ENCODE measurements at regions of chr11 and their contacts with region 1.

Region 1: GRCh38 chr11:66842896-66843775 is at the start of gene RCE1:
- DNase-seq: peak; percentile 80 to 98 (median 90)
- ATAC-seq: peak; percentile 82
- H3K4me3 ChIP-seq: peak within 1 kb of the TSS; percentile 96
- H3K4me3 Mint-ChIP-seq: peak within 1 kb of the TSS; percentile 94
- H3K27ac ChIP-seq: peak within 1 kb of the TSS; percentile 97 to 99
- H3K27ac Mint-ChIP-seq: peak within 1 kb of the TSS; percentile 96
- H3K4me1 ChIP-seq: peaks cover 49% of the 10 kb centered on the region
- H3K4me1 Mint-ChIP-seq: peaks cover 52% of the 10 kb centered on the region
- H3K27me3 ChIP-seq: no peaks in the 10 kb centered on the region
- H3K27me3 Mint-ChIP-seq: no peaks in the 10 kb centered on the region
- CTCF ChIP-seq: no peak
- total RNA-seq, gene RCE1: 60.1 to 63.0 TPM

Region 2: GRCh38 chr11:66744485-66745340 is 98.4 kb before region 1 on chr11:
- CTCF ChIA-PET with region 1: no interaction called
- POLR2A ChIA-PET with region 1: interaction called, 6 read pairs
- intact Hi-C with region 1: loop called in 1 of 2 experiments (anchors 2 kb)
- DNase-seq: peak; percentile 79 to 96 (median 87)
- ATAC-seq: peak; percentile 87
- H3K4me3 ChIP-seq: peak overlapping the region; percentile 90
- H3K4me3 Mint-ChIP-seq: peak overlapping the region; percentile 91
- H3K27ac ChIP-seq: peak overlapping the region; percentile 60 to 61
- H3K27ac Mint-ChIP-seq: peak overlapping the region; percentile 78
- H3K4me1 ChIP-seq: peaks cover 21% of the 10 kb centered on the region
- H3K4me1 Mint-ChIP-seq: peaks cover 13% of the 10 kb centered on the region
- H3K27me3 ChIP-seq: no peaks in the 10 kb centered on the region
- H3K27me3 Mint-ChIP-seq: no peaks in the 10 kb centered on the region
- CTCF ChIP-seq: no peak

Region 3: GRCh38 chr11:66800720-66801428 is 42.3 kb before region 1 on chr11:
- CTCF ChIA-PET with region 1: no interaction called
- POLR2A ChIA-PET with region 1: no interaction called
- intact Hi-C with region 1: no loop called
- DNase-seq: no peak
- ATAC-seq: no peak
- H3K4me3 ChIP-seq: no peak overlapping the region
- H3K4me3 Mint-ChIP-seq: no peak overlapping the region
- H3K27ac ChIP-seq: no peak overlapping the region
- H3K27ac Mint-ChIP-seq: no peak overlapping the region
- H3K4me1 ChIP-seq: no peaks in the 10 kb centered on the region
- H3K4me1 Mint-ChIP-seq: no peaks in the 10 kb centered on the region
- H3K27me3 ChIP-seq: no peaks in the 10 kb centered on the region
- H3K27me3 Mint-ChIP-seq: no peaks in the 10 kb centered on the region
- CTCF ChIP-seq: no peak

Region 4: GRCh38 chr11:66820381-66820780 is 22.8 kb before region 1 on chr11:
- CTCF ChIA-PET with region 1: no interaction called
- POLR2A ChIA-PET with region 1: no interaction called
- intact Hi-C with region 1: no loop called
- DNase-seq: no peak
- ATAC-seq: no peak
- H3K4me3 ChIP-seq: no peak overlapping the region
- H3K4me3 Mint-ChIP-seq: no peak overlapping the region
- H3K27ac ChIP-seq: no peak overlapping the region
- H3K27ac Mint-ChIP-seq: no peak overlapping the region
- H3K4me1 ChIP-seq: no peaks in the 10 kb centered on the region
- H3K4me1 Mint-ChIP-seq: no peaks in the 10 kb centered on the region
- H3K27me3 ChIP-seq: no peaks in the 10 kb centered on the region
- H3K27me3 Mint-ChIP-seq: no peaks in the 10 kb centered on the region
- CTCF ChIP-seq: no peak

Region 5: GRCh38 chr11:66855574-66856495 is 12.7 kb after region 1 on chr11:
- CTCF ChIA-PET with region 1: interaction called, 4 read pairs
- POLR2A ChIA-PET with region 1: interaction called, 47 read pairs
- intact Hi-C with region 1: no loop called
- DNase-seq: peak in 13 of 14 experiments; percentile 42 to 88 (median 69)
- ATAC-seq: peak; percentile 64
- H3K4me3 ChIP-seq: peak overlapping the region; percentile 67
- H3K4me3 Mint-ChIP-seq: peak overlapping the region; percentile 83
- H3K27ac ChIP-seq: peak overlapping the region; percentile 25 to 26
- H3K27ac Mint-ChIP-seq: peak overlapping the region; percentile 64
- H3K4me1 ChIP-seq: peaks cover 20% of the 10 kb centered on the region
- H3K4me1 Mint-ChIP-seq: no peaks in the 10 kb centered on the region
- H3K27me3 ChIP-seq: no peaks in the 10 kb centered on the region
- H3K27me3 Mint-ChIP-seq: no peaks in the 10 kb centered on the region
- CTCF ChIP-seq: no peak

Region 6: DNA sequence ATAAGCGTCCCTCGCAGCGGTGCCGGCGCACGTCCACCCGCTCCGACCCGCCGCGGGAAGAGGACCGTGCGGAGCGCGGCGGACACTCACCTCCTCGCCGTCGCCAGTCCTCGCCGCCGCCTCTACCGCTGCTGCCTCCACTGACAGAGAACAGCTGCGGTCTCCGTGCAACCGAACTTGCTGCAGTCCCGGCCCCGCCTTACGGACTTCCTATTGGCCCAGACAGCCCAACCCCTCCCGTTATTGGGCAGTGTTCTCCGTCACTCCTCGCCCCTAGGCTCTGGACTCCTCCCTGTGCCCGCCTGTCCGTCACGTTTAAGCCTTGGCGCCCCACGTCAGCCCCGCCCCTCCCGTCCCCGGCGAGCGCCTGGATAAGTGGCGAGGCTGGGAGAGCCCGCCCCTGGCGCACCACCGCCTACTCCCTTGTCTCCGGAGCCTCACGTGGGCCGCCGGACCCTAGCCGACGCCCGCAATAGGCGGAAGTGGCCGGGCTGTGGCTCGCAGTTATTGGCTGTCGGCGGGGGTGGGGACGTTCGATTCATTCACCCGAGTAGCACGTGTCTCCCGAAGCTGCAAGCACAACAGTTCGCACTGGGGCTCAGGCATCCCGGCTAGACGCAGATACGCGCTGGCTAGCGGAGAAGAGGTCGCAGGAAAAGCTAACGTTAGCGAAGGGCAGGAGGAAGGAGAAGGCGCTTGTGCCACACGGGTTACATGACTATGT is 115.3 kb after region 1 on chr11 and contains the start of gene PC:
- CTCF ChIA-PET with region 1: no interaction called
- POLR2A ChIA-PET with region 1: interaction called, 12 read pairs
- intact Hi-C with region 1: loop called in 1 of 2 experiments (anchors 5 kb)
- DNase-seq: peak; percentile 91 to 99 (median 96)
- ATAC-seq: peak; percentile 96
- H3K4me3 ChIP-seq: peak within 1 kb of the TSS; percentile 57
- H3K4me3 Mint-ChIP-seq: peak within 1 kb of the TSS; percentile 91
- H3K27ac ChIP-seq: peak within 1 kb of the TSS; percentile 33 to 41
- H3K27ac Mint-ChIP-seq: peak within 1 kb of the TSS; percentile 71
- H3K4me1 ChIP-seq: peaks cover 20% of the 10 kb centered on the region
- H3K4me1 Mint-ChIP-seq: peaks cover 21% of the 10 kb centered on the region
- H3K27me3 ChIP-seq: no peaks in the 10 kb centered on the region
- H3K27me3 Mint-ChIP-seq: no peaks in the 10 kb centered on the region
- CTCF ChIP-seq: no peak
- total RNA-seq, gene PC: 5.1 to 7.1 TPM